ENCODE measurements at regions of chr5 and their contacts with region 1.

Region 1: DNA sequence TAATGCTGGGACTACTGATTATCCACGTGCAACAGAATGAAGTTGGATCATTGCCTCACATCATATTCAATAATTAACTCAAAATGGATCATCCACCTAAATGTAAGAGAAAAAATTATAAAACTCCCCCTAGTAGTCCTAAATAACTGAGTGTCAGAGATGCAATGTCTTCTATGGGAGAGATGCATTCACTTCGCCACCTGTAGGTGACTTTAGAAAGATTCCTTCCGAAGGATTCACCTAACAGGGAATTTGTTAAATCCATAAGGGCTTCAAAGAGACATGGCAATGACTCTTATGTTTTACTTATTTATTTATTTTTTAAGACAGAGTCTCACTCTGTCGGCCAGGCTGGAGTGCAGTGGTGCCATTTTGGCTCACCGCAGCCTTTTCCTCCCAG is 526.0 kb downstream of the MTRR start:
- DNase-seq: no peak
- ATAC-seq: no peak
- H3K4me3 ChIP-seq: no peak overlapping the region
- H3K27ac ChIP-seq: no peak overlapping the region
- H3K4me1 ChIP-seq: no peaks in the 10 kb centered on the region
- H3K27me3 ChIP-seq: no peaks in the 10 kb centered on the region
- CTCF ChIP-seq: no peak
- POLR2A ChIP-seq: no peak

Region 2: GRCh38 chr5:8500426-8500825 is 105.5 kb after region 1 on chr5:
- intact Hi-C with region 1: loop called in 1 of 10 experiments (anchors 10 kb)
- DNase-seq: no peak
- ATAC-seq: no peak
- H3K4me3 ChIP-seq: no peak overlapping the region
- H3K27ac ChIP-seq: no peak overlapping the region
- H3K4me1 ChIP-seq: no peaks in the 10 kb centered on the region
- H3K27me3 ChIP-seq: no peaks in the 10 kb centered on the region
- CTCF ChIP-seq: no peak
- POLR2A ChIP-seq: no peak